Right ventricle myocardium inferior (tissue), 1 donor: ENCODE measurements at regions of chr3 and their contacts with region 1.

Region 1: DNA sequence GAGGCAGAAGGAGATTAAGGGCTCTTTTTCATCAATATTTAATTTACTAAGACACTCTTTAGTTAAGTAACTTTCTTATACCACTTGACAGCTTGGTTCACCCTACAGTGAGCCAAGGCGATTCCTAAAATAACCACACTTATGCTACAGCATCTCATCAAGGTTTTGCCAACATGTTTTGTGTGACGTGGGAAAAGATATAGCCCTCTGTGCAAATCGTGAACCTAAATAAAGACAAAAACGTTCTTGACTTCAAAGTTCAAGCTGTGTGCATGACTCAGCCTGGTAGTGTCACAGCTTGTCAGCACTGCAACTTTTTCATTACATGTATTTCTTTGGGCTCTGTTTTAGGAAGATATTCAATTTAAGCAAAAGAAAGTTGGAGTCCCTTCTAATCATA is 297.0 kb upstream of the EPHA3 start:
- DNase-seq: no peak
- ATAC-seq: peak; percentile 69

Region 2: GRCh38 chr3:88690287-88690686 is 120.2 kb before region 1 on chr3:
- intact Hi-C with region 1: no loop called
- DNase-seq: no peak
- ATAC-seq: no peak

Region 3: GRCh38 chr3:88707837-88708236 is 102.6 kb before region 1 on chr3:
- intact Hi-C with region 1: no loop called
- DNase-seq: no peak
- ATAC-seq: no peak

Region 4: DNA sequence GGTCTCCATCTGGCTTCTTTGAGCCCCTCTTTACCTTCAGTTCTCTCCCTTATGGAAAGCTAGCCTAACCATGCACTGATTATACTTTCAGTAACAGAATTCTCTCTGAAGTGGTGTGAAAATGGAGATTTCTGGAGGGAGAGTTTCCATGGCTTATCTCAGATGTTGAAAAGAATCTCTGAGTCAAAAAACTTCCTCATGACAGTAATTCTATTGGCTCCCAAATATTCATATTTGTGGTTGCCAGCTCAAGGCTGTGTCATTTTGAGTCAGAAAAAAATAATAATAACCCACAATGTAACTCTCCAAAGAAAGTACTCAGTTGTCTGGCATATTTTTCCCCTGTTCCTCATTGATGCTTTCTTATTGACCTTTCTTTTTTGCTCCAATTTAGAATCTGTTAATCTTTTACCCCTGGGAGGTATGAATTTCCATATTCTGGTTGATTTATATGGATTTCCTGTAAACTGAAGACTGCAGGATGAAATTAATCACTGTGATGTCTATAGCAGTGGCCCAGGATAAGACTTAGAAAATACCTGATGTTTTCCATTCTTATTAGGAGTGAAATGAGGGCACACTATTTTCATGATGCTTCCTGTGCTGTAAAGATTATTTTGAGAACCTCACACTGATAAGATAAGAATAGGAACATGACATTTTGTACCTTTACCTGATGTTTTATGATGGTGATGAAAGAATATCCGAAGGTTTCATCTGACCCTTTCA is 147.4 kb after region 1 on chr3:
- intact Hi-C with region 1: loop called (anchors 10 kb)
- DNase-seq: no peak
- ATAC-seq: no peak